ENCODE measurements at regions of chr5 and their contacts with region 1.

Region 1: DNA sequence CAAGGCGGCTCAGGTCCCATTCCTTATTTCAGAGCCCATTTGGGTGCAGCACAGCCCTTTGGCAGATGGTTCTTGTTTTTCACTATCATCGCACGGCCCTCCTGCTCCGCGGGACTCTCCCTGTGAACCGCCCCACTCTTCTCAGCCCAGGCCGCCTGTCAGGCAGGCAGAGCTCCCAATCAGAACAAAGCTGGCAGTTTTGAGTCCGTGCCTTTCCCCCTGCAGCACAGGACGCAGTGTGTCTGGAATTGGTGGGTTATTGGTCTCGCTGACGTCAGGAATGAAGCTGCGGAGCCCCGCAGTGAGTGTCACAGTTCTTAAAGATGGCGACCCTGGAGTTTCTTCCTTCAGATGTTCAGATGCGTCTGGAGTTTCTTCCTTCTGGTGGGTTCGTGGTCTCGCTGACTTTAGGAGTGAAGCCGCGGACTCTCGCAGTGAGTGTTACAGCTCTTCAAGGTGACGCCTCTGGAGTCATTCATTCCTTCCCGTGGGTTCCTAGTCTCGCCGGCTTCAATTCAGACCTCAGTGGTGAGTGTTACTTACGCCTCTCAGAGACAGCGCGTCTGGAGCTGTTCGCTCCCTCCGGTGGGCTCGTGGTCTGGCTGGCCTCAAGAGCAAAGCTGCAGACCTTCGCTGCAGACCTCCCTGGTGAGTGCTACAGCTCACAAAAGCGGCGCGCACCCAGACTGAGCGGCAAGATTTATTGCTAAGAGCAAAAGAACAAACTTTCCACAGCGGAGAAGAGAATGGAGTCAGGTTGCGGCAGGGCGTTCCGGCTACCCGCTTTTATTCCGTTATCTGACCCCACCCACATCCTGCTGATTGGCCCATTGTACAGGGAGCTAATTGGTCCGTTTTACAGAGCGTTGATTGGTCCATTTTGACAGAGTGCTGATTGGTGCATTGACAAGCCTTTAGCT is 7.5 kb downstream of the ZDHHC11B start:
- DNase-seq: no peak
- ATAC-seq: no peak
- H3K4me3 ChIP-seq: no peak overlapping the region
- H3K27ac ChIP-seq: no peak overlapping the region
- H3K4me1 ChIP-seq: no peaks in the 10 kb centered on the region
- H3K27me3 ChIP-seq: no peaks in the 10 kb centered on the region
- CTCF ChIP-seq: no peak
- POLR2A ChIP-seq: no peak

Region 2: DNA sequence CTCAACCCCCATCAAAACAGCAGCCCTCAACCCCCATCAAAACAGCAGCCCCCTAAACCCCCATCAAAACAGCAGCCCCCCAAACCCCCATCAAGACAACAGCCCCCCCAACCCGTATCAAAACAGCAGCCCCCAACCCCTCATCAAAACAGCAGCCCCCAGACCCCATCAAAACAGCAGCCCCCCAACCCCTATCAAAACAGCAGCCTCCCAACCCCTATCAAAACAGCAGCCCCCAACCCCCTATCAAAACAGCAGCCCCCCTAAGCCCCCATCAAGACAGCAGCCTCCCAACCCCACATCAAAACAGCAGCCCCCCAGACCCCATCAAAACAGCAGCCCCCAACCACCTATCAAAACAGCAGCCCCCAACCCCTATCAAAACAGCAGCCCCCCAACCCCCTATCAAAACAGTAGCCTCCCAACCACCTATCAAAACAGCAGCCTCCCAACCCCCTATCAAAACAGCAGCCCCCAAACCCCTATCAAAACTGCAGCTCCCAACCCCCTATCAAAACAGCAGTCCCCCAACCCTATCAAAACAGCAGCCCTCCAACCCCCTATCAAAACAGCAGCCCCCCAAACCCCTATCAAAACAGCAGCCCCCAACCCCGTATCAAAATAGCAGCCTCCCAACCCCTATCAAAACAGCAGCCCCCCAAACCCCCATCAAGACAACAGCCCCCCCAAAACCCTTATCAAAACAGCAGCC is 85.1 kb before region 1 on chr5:
- in situ Hi-C with region 1: no loop called
- intact Hi-C with region 1: loop called (anchors 5 kb)
- DNase-seq: no peak
- ATAC-seq: no peak
- H3K4me3 ChIP-seq: peak overlapping the region; percentile 58 to 71 (median 64)
- H3K27ac ChIP-seq: peak overlapping the region; percentile 63 to 81 (median 78)
- H3K4me1 ChIP-seq: peaks cover 0 to 9% of the 10 kb centered on the region in 2 donors
- H3K27me3 ChIP-seq: no peaks in the 10 kb centered on the region
- CTCF ChIP-seq: no peak
- POLR2A ChIP-seq: no peak

Measured in gastrocnemius medialis (tissue), 4 donors.